PC-9 (cell line): ENCODE measurements at regions of chr1 and their contacts with region 1.

Region 1: DNA sequence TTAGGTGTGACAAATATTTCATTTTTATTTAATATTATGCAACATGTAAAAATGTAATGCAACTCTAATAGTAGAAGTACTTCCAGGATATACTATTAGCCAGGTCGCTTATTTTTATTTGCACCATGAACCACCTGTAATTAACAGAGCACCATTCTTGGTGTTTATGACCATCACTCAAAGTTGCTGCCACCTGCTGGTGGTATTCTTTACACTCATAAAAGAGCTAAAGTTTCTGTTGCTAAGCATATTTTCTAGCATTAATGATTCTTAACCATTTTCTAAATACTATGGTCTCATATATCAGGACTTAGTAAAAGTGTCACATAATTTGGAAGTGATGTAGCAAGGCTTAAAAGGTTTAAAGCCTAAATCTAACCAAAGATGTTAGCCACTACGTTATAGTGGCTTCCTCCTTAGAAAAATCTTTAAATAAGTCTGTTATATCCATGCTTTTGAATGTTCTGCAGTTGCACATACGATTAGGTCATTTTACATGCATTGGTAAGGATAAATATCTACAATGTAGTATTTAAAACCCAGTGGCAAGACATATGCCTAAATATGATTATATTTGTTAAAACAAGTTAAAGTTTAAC is 244.5 kb downstream of the NEGR1 start:
- DNase-seq: peak in 1 of 2 experiments; percentile 8
- H3K4me3 ChIP-seq: no peak overlapping the region
- H3K27ac ChIP-seq: no peak overlapping the region
- H3K4me1 ChIP-seq: no peaks in the 10 kb centered on the region
- H3K27me3 ChIP-seq: no peaks in the 10 kb centered on the region
- CTCF ChIP-seq: peak; percentile 79

Region 2: GRCh38 chr1:71587961-71588360 is 449.9 kb before region 1 on chr1:
- CTCF ChIA-PET with region 1: no interaction called
- POLR2A ChIA-PET with region 1: no interaction called
- intact Hi-C with region 1: loop called (anchors 5 kb)
- DNase-seq: no peak
- H3K4me3 ChIP-seq: no peak overlapping the region
- H3K27ac ChIP-seq: no peak overlapping the region
- H3K4me1 ChIP-seq: no peaks in the 10 kb centered on the region
- H3K27me3 ChIP-seq: no peaks in the 10 kb centered on the region
- CTCF ChIP-seq: peak; percentile 26; the same call in 1 of the 2 replicates

Region 3: GRCh38 chr1:71944006-71944405 is 93.8 kb before region 1 on chr1:
- CTCF ChIA-PET with region 1: interaction called, 18 read pairs
- POLR2A ChIA-PET with region 1: no interaction called
- intact Hi-C with region 1: no loop called
- DNase-seq: no peak
- H3K4me3 ChIP-seq: no peak overlapping the region
- H3K27ac ChIP-seq: no peak overlapping the region
- H3K4me1 ChIP-seq: no peaks in the 10 kb centered on the region
- H3K27me3 ChIP-seq: no peaks in the 10 kb centered on the region
- CTCF ChIP-seq: no peak

Region 4: GRCh38 chr1:71979882-71980281 is 58.0 kb before region 1 on chr1:
- CTCF ChIA-PET with region 1: no interaction called
- POLR2A ChIA-PET with region 1: no interaction called
- intact Hi-C with region 1: no loop called
- DNase-seq: no peak
- H3K4me3 ChIP-seq: no peak overlapping the region
- H3K27ac ChIP-seq: no peak overlapping the region
- H3K4me1 ChIP-seq: no peaks in the 10 kb centered on the region
- H3K27me3 ChIP-seq: no peaks in the 10 kb centered on the region
- CTCF ChIP-seq: no peak

Region 5: DNA sequence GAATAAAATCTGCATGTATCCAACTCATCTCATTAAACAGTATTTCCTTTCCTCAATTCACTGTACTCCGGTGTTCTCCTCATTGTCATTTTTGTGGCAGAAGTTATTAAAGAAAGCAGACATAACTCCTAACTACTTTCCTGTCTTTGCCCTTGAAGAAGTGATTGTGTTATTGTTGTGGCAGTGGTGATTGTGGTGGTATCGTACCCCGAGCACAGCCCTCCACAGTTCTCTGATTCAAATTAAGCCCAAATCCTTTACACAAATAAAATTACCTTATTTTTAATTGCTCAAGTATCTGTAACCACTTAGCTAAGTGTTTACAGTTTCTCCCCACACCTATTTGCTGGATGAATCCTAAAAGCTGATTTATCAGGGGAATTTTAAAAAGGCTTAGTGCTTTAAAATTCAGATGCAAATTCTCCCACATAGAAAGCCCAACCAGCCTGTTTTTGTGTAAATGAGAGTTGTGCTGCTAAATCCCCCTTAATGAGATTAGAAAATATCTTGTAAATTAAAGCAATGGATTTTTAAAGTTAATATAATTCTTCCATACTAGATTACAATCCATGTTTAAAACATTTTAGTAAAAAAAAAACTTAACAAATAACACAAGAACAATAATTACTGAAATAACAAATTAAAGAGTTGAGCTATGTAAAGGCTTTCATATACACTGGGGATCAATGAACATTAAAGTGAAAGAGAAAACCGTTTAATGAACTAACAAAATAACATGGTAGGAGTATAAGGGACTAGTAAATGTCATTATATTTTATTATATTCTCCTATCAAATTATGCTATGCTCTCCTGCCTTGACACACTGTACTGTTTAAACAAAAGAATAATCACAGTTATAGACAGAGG is 14.5 kb before region 1 on chr1:
- CTCF ChIA-PET with region 1: interaction called, 10 read pairs
- POLR2A ChIA-PET with region 1: no interaction called
- intact Hi-C with region 1: no loop called
- DNase-seq: no peak
- H3K4me3 ChIP-seq: no peak overlapping the region
- H3K27ac ChIP-seq: no peak overlapping the region
- H3K4me1 ChIP-seq: no peaks in the 10 kb centered on the region
- H3K27me3 ChIP-seq: no peaks in the 10 kb centered on the region
- CTCF ChIP-seq: no peak

Region 6: GRCh38 chr1:72051538-72051937 is 13.7 kb after region 1 on chr1:
- CTCF ChIA-PET with region 1: no interaction called
- POLR2A ChIA-PET with region 1: no interaction called
- intact Hi-C with region 1: no loop called
- DNase-seq: no peak
- H3K4me3 ChIP-seq: no peak overlapping the region
- H3K27ac ChIP-seq: no peak overlapping the region
- H3K4me1 ChIP-seq: no peaks in the 10 kb centered on the region
- H3K27me3 ChIP-seq: no peaks in the 10 kb centered on the region
- CTCF ChIP-seq: no peak

Region 7: GRCh38 chr1:72086394-72086793 is 48.5 kb after region 1 on chr1:
- CTCF ChIA-PET with region 1: no interaction called
- POLR2A ChIA-PET with region 1: no interaction called
- intact Hi-C with region 1: no loop called
- DNase-seq: no peak
- H3K4me3 ChIP-seq: no peak overlapping the region
- H3K27ac ChIP-seq: no peak overlapping the region
- H3K4me1 ChIP-seq: no peaks in the 10 kb centered on the region
- H3K27me3 ChIP-seq: no peaks in the 10 kb centered on the region
- CTCF ChIP-seq: no peak

Region 8: DNA sequence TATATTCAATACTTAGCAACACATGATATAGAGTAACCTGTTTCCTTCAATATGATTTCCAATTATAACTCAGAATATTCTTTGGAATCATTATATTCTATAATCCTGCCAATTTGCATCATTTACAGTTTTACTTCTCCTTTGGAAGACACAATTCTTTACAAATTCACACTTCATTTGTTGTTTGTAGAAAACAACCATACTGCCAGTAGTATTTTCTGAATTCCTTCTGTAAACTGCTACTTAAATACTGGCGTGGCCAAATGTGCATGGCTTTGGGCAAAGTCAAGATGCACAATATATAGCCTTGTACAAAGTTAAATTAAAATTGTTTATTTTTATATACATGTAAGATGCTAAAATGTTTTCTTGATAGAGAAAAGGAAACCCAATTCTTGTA is 931.6 kb after region 1 on chr1:
- CTCF ChIA-PET with region 1: no interaction called
- POLR2A ChIA-PET with region 1: interaction called, 15 read pairs
- intact Hi-C with region 1: no loop called
- DNase-seq: no peak
- H3K4me3 ChIP-seq: no peak overlapping the region
- H3K27ac ChIP-seq: no peak overlapping the region
- H3K4me1 ChIP-seq: no peaks in the 10 kb centered on the region
- H3K27me3 ChIP-seq: no peaks in the 10 kb centered on the region
- CTCF ChIP-seq: no peak